PC-3 (cell line): ENCODE measurements at regions of chr15 and their contacts with region 1.

Region 1: DNA sequence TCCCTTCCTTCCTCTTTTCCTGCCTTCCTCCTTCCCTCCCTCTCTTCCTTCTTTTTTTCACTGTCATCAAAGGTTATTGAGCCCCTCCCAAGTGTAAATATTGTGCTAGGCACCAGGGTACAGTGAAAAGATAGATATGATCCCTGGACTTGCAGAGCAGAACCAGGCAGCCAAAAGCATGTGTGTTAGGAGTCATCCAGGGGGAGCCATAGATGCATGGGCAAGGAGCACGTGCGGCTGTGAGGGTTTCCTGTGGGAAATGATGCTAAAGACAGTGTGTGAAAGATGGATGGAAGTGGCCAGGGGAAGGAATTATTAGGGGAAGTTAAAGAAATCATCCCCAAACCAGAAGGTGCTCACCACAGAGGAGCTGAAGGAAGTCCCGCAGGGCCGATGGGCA is 65.2 kb downstream of the NR2F2 start:
- DNase-seq: no peak
- ATAC-seq: no peak
- H3K4me3 ChIP-seq: no peak overlapping the region
- H3K27ac ChIP-seq: no peak overlapping the region
- H3K4me1 ChIP-seq: no peaks in the 10 kb centered on the region
- H3K27me3 ChIP-seq: peaks cover 24% of the 10 kb centered on the region
- CTCF ChIP-seq: no peak

Region 2: GRCh38 chr15:96209285-96209735 is 186.4 kb before region 1 on chr15:
- CTCF ChIA-PET with region 1: no interaction called
- POLR2A ChIA-PET with region 1: no interaction called
- intact Hi-C with region 1: no loop called
- DNase-seq: no peak
- ATAC-seq: no peak
- H3K4me3 ChIP-seq: no peak overlapping the region
- H3K27ac ChIP-seq: no peak overlapping the region
- H3K4me1 ChIP-seq: no peaks in the 10 kb centered on the region
- H3K27me3 ChIP-seq: no peaks in the 10 kb centered on the region
- CTCF ChIP-seq: no peak

Region 3: DNA sequence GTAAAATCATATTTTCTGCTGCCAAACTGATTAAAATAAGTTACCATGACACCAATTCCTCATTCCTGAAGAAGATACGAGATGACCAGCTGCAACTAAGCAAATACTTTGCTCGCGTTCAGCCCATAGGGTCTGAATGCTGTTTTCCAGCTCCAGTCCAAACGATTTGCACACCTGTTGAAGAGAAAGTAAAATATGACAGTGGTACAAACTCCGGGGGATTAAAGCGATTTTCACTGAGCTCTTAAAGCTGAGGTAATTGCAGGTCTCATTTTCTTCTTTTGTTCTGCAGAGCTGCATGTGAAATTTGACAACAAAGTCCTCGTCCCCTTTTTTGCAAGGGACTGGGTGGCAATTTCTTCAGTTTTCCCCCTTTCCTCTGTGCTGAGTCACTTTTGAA is 53.2 kb after region 1 on chr15:
- CTCF ChIA-PET with region 1: no interaction called
- POLR2A ChIA-PET with region 1: interaction called, 14 read pairs
- intact Hi-C with region 1: no loop called
- DNase-seq: no peak
- ATAC-seq: no peak
- H3K4me3 ChIP-seq: no peak overlapping the region
- H3K27ac ChIP-seq: no peak overlapping the region
- H3K4me1 ChIP-seq: no peaks in the 10 kb centered on the region
- H3K27me3 ChIP-seq: peaks cover 88% of the 10 kb centered on the region
- CTCF ChIP-seq: no peak

Region 4: DNA sequence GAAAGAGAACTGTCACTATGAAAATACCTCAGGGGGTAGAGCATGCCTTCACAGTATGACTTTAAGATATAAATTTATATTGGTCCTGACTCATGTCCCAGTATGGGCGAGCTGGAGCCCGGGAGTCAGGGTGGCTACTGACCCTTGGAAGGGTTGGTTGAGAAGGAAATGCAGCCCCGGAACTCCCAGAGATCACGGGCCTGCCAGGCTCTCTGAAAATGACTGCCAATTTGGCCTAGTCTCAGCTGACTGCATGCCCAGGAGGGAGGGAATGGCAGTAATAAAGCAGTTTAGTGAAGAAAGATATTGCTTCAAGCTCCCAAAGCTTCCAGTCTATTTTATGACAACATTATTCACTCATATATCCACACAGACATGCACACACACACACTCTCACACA is 233.8 kb after region 1 on chr15:
- CTCF ChIA-PET with region 1: no interaction called
- POLR2A ChIA-PET with region 1: no interaction called
- intact Hi-C with region 1: no loop called
- DNase-seq: no peak
- ATAC-seq: no peak
- H3K4me3 ChIP-seq: no peak overlapping the region
- H3K27ac ChIP-seq: no peak overlapping the region
- H3K4me1 ChIP-seq: no peaks in the 10 kb centered on the region
- H3K27me3 ChIP-seq: peaks cover 62% of the 10 kb centered on the region
- CTCF ChIP-seq: no peak